ENCODE measurements at regions of chr11 and their contacts with region 1.

Region 1: DNA sequence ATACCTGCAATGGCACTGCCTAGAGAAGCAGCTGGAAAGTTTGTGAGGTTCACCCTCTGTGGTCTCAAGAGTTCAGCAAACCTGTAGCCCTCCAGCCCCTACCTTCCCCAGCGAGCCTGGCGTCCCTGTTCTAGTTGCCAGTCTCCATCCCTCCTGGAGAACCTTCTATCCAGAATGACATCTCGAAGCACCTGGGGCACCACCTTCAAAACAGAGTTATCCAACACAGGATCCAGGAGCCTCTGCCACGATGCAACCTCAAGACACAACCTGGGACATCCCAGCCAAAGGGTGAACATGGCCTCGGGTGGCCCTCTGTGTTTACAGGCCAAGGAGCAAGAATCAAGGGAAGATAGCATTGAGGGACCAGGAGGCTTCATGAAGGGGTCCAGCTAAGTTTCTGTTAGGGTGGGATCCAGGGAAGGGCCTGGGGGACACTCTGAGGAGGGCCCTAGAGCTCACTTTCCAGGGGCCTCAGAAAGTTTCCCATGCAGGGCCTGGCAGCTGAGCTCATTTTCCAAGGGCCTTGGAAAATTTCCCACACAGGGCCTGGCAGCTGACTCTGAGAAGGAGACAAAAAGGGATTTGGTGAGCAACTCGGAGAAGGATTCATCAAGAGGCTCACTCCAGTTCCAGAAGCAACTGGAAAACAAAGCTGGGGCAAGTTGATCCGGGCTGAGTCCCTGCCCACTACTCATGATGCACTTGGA is 36.9 kb upstream of the SYT13 start:
- DNase-seq: no peak
- ATAC-seq: no peak
- H3K4me3 ChIP-seq: no peak overlapping the region
- H3K27ac ChIP-seq: no peak overlapping the region
- H3K4me1 ChIP-seq: no peaks in the 10 kb centered on the region
- H3K27me3 ChIP-seq: no peaks in the 10 kb centered on the region
- CTCF ChIP-seq: no peak
- POLR2A ChIP-seq: no peak

Region 2: DNA sequence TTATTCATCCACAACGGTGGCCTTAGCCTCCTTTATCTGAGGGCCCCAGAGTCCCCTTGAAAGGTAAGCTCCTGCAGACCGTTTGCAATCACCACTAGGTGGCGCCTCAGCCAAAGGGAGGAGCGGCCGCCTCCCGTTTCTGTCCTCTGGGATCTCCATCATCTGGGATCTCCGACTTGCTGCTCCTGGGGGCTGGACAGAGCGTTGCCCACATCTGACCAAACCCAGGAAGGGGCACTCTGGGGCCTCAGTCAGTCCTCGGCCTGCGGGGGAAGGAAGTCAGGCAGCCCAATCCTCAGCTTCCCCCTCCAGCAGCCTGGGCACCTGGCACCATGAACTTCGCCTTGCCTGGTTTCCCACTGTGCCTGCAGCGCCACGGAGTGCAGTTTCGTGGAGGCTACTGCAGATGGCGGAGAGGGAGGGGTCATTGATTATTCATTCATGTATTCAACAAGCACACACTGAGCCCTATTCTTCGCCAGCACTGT is 395.8 kb before region 1 on chr11:
- intact Hi-C with region 1: loop called (anchors 10 kb)
- DNase-seq: peak; percentile 65 to 76 (median 74)
- ATAC-seq: peak; percentile 67
- H3K4me3 ChIP-seq: no peak overlapping the region
- H3K27ac ChIP-seq: no peak overlapping the region
- H3K4me1 ChIP-seq: no peaks in the 10 kb centered on the region
- H3K27me3 ChIP-seq: no peaks in the 10 kb centered on the region
- CTCF ChIP-seq: peak; percentile 76 to 92 (median 86)
- POLR2A ChIP-seq: no peak

Region 3: GRCh38 chr11:45436118-45436517 is 113.1 kb after region 1 on chr11:
- intact Hi-C with region 1: no loop called
- DNase-seq: no peak
- ATAC-seq: no peak
- H3K4me3 ChIP-seq: no peak overlapping the region
- H3K27ac ChIP-seq: no peak overlapping the region
- H3K4me1 ChIP-seq: no peaks in the 10 kb centered on the region
- H3K27me3 ChIP-seq: no peaks in the 10 kb centered on the region
- CTCF ChIP-seq: no peak
- POLR2A ChIP-seq: no peak